Right ventricle myocardium superior (tissue), 1 donor: ENCODE measurements at regions of chr5 and their contacts with region 1.

Region 1: GRCh38 chr5:71589903-71590302 is 2.8 kb downstream of the MCCC2 start:
- DNase-seq: no peak
- ATAC-seq: no peak

Region 2: GRCh38 chr5:71703941-71704340 is 114.0 kb after region 1 on chr5:
- intact Hi-C with region 1: loop called (anchors 10 kb)
- DNase-seq: no peak
- ATAC-seq: no peak